AG04449 (cell line): ENCODE measurements at regions of chr5 and their contacts with region 1.

Region 1: DNA sequence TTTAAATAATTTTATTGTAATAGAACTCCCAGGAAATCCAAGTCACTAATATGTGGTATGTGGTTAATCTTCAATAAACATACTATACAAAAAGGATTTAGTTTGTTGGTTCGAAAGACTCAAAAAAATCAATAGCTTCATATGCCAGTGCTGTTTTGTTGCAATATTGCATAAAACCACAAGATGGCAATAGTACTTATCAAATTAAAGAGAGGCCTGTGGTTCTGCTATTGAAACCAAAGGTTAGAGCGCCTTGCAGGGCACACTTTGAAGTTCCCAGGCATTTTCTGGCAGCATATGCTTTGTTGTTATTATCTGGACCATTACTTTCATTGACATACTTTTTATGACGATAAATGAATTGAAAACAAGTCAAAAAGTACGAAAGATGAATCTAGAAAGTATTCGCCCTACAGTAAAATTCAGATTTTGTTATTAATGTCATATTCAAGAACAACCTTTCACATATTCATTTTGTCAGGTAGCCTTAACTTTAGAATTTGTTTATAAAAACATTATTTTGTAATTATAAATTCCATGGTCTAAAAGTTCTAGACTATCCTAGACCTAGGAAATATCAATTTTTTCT is 316.3 kb downstream of the MCTP1 start:
- DNase-seq: peak; percentile 12
- H3K4me3 ChIP-seq: no peak overlapping the region
- CTCF ChIP-seq: peak; percentile 51

Region 2: DNA sequence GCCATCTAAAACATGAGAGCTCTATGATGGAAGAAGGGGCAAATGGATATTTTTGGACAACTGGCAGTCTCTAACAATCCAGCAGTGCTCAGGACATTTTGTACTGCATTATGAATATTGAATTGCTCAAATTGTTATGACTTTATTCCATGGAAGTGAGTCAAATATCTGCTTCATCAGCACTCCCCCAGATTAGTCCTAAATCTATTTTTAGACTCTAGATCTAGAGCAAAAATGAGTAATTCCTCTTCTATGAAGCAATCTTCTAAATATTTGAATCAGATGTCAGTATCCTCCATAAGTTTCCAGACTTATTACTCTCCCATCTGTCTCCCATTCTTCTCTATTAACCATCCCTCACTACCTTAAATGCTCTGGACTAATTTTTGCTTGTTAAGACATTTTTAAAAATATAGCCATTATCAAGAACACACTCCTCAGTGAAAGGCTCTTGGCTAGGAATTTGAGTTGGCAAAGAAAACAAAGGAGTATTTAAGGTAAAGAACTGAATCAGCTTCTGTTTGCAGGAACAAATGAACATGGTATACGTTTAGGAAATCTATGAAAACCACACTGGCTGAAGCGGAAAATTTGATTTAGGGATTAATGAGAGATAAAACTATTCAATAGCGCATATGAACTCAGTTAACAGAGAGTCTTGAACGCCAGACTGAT is 15.4 kb after region 1 on chr5:
- CTCF ChIA-PET with region 1: interaction called, 16 read pairs
- POLR2A ChIA-PET with region 1: no interaction called
- DNase-seq: peak; percentile 23
- H3K4me3 ChIP-seq: no peak overlapping the region
- CTCF ChIP-seq: no peak

Region 3: DNA sequence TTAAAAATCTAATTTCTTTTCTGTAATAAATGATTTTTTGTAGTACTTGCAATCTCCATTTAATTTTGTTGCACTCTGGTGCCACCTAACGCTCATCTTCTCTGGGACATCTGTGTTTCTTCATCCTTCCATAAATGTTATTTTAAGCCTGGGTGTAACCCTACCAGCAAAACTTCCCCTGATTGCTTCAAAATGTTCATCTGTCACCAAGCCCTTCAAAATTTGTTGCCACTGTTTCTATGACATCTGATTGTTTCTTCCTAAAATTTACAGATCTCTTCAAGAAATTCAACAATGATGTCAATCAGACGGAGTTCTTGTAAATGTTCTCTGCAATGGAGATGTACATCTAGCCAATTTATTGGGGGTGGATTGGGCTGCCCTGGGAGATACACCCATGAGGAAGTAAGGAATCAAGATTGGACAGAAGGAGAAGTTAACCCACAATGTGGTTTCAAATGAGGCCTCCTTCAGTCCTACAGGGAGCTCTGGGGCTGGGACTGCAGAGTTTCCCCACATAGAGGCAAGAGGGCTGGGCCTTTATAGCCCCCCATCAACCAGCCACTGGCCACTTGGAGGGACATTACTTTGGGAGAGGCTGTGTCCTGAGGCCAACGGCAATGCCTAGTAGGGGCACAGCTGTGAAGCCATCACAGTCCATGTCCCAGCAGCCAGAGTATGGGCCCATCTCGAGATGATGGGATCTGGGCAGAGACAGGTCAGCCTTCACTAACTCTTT is 293.0 kb after region 1 on chr5:
- CTCF ChIA-PET with region 1: interaction called, 129 read pairs
- POLR2A ChIA-PET with region 1: no interaction called
- DNase-seq: no peak
- H3K4me3 ChIP-seq: no peak overlapping the region
- CTCF ChIP-seq: peak; percentile 25